HCT116 (cell line): ENCODE measurements at regions of chr1 and their contacts with region 1.

Region 1: GRCh38 chr1:159891275-159892157 is 8.4 kb downstream of the CFAP45 start:
- DNase-seq: peak; percentile 87
- ATAC-seq: peak; percentile 94
- H3K4me3 ChIP-seq: no peak overlapping the region
- H3K27ac ChIP-seq: no peak overlapping the region
- H3K4me1 ChIP-seq: peaks cover 11 to 23% of the 10 kb centered on the region in 2 experiments; a peak in 3 of 4 replicates
- H3K27me3 ChIP-seq: no peaks in the 10 kb centered on the region; the same call in 1 of the 2 replicates
- CTCF ChIP-seq: peak; percentile 99 to 100 (median 100)
- POLR2A ChIP-seq: no peak
- RAD21 ChIP-seq: peak; percentile 100

Region 2: DNA sequence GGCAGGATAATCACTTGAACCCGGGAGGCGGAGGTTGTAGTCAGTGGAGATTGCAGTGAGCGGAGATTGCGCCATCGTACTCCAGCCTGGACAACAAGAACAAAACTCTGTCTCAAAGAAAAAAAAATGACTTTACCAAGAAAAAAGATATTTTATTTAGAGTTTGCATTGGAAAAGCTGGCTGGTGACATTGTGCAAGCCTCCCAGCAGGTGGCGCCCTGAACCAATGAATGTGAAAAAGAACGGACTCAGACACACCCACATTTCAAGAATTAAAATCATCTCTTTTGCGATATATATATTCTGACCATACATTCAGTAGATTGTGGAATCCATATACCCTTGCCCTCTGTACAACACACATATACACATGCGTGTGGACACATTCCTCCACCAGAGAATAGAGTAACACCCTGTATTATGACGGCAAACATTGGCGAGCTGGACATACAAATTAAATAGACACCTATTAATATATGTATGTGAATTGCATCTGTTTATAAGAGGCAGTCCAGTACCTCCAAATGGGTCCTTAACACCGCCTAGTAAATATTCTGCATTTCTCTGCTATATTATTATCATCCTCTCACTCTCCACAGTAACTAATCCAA is 759.1 kb before region 1 on chr1:
- CTCF ChIA-PET with region 1: interaction called, 4 read pairs
- POLR2A ChIA-PET with region 1: no interaction called
- RAD21 ChIA-PET with region 1: no interaction called
- intact Hi-C with region 1: loop called (anchors 10 kb)
- DNase-seq: peak; percentile 42
- ATAC-seq: peak; percentile 65
- H3K4me3 ChIP-seq: no peak overlapping the region
- H3K27ac ChIP-seq: no peak overlapping the region
- H3K4me1 ChIP-seq: no peaks in the 10 kb centered on the region
- H3K27me3 ChIP-seq: peaks cover 21% of the 10 kb centered on the region
- CTCF ChIP-seq: peak; percentile 73 to 85 (median 84)
- POLR2A ChIP-seq: no peak
- RAD21 ChIP-seq: peak; percentile 80

Region 3: GRCh38 chr1:159177273-159177907 is 714.1 kb before region 1 on chr1:
- CTCF ChIA-PET with region 1: no interaction called
- POLR2A ChIA-PET with region 1: no interaction called
- RAD21 ChIA-PET with region 1: no interaction called
- intact Hi-C with region 1: no loop called
- DNase-seq: peak; percentile 21
- ATAC-seq: no peak
- H3K4me3 ChIP-seq: no peak overlapping the region
- H3K27ac ChIP-seq: no peak overlapping the region
- H3K4me1 ChIP-seq: no peaks in the 10 kb centered on the region
- H3K27me3 ChIP-seq: peaks cover 30% of the 10 kb centered on the region
- CTCF ChIP-seq: no peak
- POLR2A ChIP-seq: no peak
- RAD21 ChIP-seq: no peak

Region 4: DNA sequence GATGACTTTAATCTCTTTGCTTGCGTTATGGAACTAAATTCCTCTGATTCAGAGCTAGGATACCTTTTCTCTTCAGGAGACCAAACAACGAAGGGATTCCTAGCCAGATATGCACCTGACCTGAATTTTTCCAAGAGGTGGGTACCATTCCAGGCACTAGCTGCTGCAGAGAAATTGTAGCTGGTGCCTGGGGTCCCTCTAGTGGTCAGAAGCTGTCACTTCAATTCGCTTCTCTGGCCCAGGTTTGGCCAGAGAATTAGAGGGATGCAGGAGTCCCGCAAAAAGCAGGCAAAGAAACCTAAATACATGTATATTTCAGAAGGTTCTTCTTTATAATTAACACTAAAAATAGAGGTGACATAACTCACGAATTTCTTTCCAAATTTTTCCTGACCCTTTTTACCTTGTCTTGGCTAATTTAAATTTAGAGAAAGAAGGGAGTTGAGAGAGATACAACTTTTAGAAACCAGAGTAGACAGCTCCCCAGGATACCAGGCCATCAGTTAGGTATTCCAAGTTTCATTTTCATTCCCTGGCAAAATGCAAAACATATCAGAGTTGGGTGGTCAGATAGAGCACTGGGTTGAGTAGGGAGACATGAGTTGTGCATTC is 677.3 kb before region 1 on chr1:
- CTCF ChIA-PET with region 1: interaction called, 6 read pairs
- POLR2A ChIA-PET with region 1: no interaction called
- RAD21 ChIA-PET with region 1: no interaction called
- intact Hi-C with region 1: loop called (anchors 1 kb)
- DNase-seq: peak; percentile 10
- ATAC-seq: peak; percentile 86
- H3K4me3 ChIP-seq: no peak overlapping the region
- H3K27ac ChIP-seq: no peak overlapping the region
- H3K4me1 ChIP-seq: no peaks in the 10 kb centered on the region
- H3K27me3 ChIP-seq: peaks cover 4% of the 10 kb centered on the region; the same call in 1 of the 2 replicates
- CTCF ChIP-seq: peak; percentile 65 to 89 (median 84)
- POLR2A ChIP-seq: no peak
- RAD21 ChIP-seq: peak; percentile 61

Region 5: DNA sequence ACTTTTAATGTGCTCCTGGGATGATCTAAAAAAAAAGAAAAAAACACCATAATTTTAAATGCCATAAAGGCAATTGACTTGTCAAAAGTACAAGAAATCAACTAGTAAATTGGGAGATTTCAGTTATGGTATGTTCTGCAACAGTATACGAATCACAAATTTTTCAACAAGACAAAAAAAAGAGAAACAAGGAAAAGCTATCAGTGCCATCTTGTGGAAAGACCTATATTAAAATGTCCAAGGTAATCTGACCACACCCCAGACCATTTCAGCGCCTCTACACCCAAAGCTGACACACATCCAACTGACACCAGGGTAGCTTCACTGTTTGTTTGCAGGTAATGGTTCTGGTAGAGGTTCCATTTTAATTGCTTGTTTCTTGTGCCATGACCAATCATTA is 115.8 kb before region 1 on chr1:
- CTCF ChIA-PET with region 1: interaction called, 44 read pairs
- POLR2A ChIA-PET with region 1: interaction called, 9 read pairs
- RAD21 ChIA-PET with region 1: interaction called, 3 to 15 read pairs
- intact Hi-C with region 1: loop called (anchors 1 kb)
- DNase-seq: no peak
- ATAC-seq: no peak
- H3K4me3 ChIP-seq: no peak overlapping the region
- H3K27ac ChIP-seq: no peak overlapping the region
- H3K4me1 ChIP-seq: peaks cover 3 to 8% of the 10 kb centered on the region in 2 experiments; a peak in 2 of 4 replicates
- H3K27me3 ChIP-seq: peaks cover 12% of the 10 kb centered on the region; the same call in 1 of the 2 replicates
- CTCF ChIP-seq: 0 out of 6 replicates have a peak, but pooled peaks of 1 of the 3 experiments have one; percentile 4
- POLR2A ChIP-seq: no peak
- RAD21 ChIP-seq: 0 out of 2 replicates have a peak, but pooled peaks have one; percentile 20

Region 6: DNA sequence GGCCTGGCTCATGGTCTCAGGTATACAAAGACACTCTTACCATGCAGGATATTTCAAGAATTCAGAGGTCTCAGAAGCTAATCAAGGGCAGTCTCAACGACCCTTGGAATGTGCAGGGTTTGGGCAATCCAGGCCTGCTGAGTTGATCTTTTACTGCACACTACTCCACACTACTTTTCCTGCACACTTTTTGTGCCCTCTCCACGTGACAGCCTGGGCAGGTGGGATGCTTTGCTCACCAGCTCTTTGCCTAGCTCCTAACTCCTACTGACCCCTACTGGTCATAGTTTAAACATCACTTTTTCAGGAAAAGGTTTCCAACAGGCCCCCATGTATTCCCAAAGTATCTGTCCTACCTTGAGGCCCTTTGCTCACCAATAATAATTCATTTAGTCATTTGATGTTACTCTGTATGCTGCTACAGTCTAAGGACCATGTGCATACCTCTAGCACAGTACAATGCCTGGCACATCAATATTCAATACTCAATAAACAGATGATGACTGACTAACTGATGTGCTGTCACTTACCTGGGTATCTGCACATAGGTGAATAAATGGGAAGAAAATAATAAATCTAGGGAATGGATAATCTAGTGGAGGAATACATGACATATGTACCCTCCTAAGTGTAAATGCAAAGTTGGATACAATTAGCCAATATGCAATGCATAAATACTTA is 101.1 kb before region 1 on chr1:
- CTCF ChIA-PET with region 1: interaction called, 12 read pairs
- POLR2A ChIA-PET with region 1: no interaction called
- RAD21 ChIA-PET with region 1: no interaction called
- intact Hi-C with region 1: no loop called
- DNase-seq: peak; percentile 24
- ATAC-seq: peak; percentile 85
- H3K4me3 ChIP-seq: no peak overlapping the region
- H3K27ac ChIP-seq: no peak overlapping the region
- H3K4me1 ChIP-seq: no peaks in the 10 kb centered on the region
- H3K27me3 ChIP-seq: peaks cover 19% of the 10 kb centered on the region; the same call in 1 of the 2 replicates
- CTCF ChIP-seq: peak; percentile 54 to 74 (median 65); a peak in 5 of 6 replicates
- POLR2A ChIP-seq: no peak
- RAD21 ChIP-seq: peak; percentile 64

Region 7: GRCh38 chr1:159829273-159829634 is 62.3 kb before region 1 on chr1:
- CTCF ChIA-PET with region 1: interaction called, 3 read pairs
- POLR2A ChIA-PET with region 1: no interaction called
- RAD21 ChIA-PET with region 1: no interaction called
- intact Hi-C with region 1: loop called (anchors 2 kb)
- DNase-seq: peak; percentile 29
- ATAC-seq: peak; percentile 100
- H3K4me3 ChIP-seq: no peak overlapping the region
- H3K27ac ChIP-seq: no peak overlapping the region
- H3K4me1 ChIP-seq: peaks cover 0 to 7% of the 10 kb centered on the region in 2 experiments; a peak in 1 of 4 replicates
- H3K27me3 ChIP-seq: peaks cover 4% of the 10 kb centered on the region; the same call in 1 of the 2 replicates
- CTCF ChIP-seq: peak; percentile 69 to 76 (median 76); a peak in 5 of 6 replicates
- POLR2A ChIP-seq: no peak
- RAD21 ChIP-seq: peak; percentile 50

Region 8: GRCh38 chr1:159854693-159855192 is 36.8 kb before region 1 on chr1:
- CTCF ChIA-PET with region 1: interaction called, 8 read pairs
- POLR2A ChIA-PET with region 1: interaction called, 3 read pairs
- RAD21 ChIA-PET with region 1: interaction called in 1 of 2 experiments, 4 read pairs
- intact Hi-C with region 1: loop called (anchors 2 kb)
- DNase-seq: peak; percentile 54
- ATAC-seq: peak; percentile 87
- H3K4me3 ChIP-seq: peak overlapping the region; percentile 62 to 74
- H3K27ac ChIP-seq: peak overlapping the region; percentile 70
- H3K4me1 ChIP-seq: peaks cover 21 to 39% of the 10 kb centered on the region in 2 experiments
- H3K27me3 ChIP-seq: no peaks in the 10 kb centered on the region
- CTCF ChIP-seq: no peak
- POLR2A ChIP-seq: peak; percentile 79
- RAD21 ChIP-seq: no peak